ENCODE measurements at regions of chr11 and their contacts with region 1.

Region 1: GRCh38 chr11:108193725-108194124 is 28.7 kb downstream of the NPAT start:
- DNase-seq: no peak
- ATAC-seq: no peak
- H3K4me3 ChIP-seq: no peak overlapping the region
- H3K4me3 Mint-ChIP-seq: no peak overlapping the region
- H3K27ac ChIP-seq: no peak overlapping the region
- H3K27ac Mint-ChIP-seq: peak overlapping the region; percentile 53
- H3K4me1 ChIP-seq: peaks cover 5% of the 10 kb centered on the region
- H3K4me1 Mint-ChIP-seq: peaks cover 41% of the 10 kb centered on the region
- H3K27me3 ChIP-seq: no peaks in the 10 kb centered on the region
- H3K27me3 Mint-ChIP-seq: no peaks in the 10 kb centered on the region
- CTCF ChIP-seq: no peak

Region 2: GRCh38 chr11:108154591-108154990 is 39.1 kb before region 1 on chr11:
- CTCF ChIA-PET with region 1: no interaction called
- POLR2A ChIA-PET with region 1: no interaction called
- intact Hi-C with region 1: loop called in 1 of 2 experiments (anchors 5 kb)
- DNase-seq: no peak
- ATAC-seq: no peak
- H3K4me3 ChIP-seq: no peak overlapping the region
- H3K4me3 Mint-ChIP-seq: no peak overlapping the region
- H3K27ac ChIP-seq: no peak overlapping the region
- H3K27ac Mint-ChIP-seq: peak overlapping the region; percentile 55
- H3K4me1 ChIP-seq: no peaks in the 10 kb centered on the region
- H3K4me1 Mint-ChIP-seq: peaks cover 5% of the 10 kb centered on the region
- H3K27me3 ChIP-seq: no peaks in the 10 kb centered on the region
- H3K27me3 Mint-ChIP-seq: no peaks in the 10 kb centered on the region
- CTCF ChIP-seq: no peak

Region 3: DNA sequence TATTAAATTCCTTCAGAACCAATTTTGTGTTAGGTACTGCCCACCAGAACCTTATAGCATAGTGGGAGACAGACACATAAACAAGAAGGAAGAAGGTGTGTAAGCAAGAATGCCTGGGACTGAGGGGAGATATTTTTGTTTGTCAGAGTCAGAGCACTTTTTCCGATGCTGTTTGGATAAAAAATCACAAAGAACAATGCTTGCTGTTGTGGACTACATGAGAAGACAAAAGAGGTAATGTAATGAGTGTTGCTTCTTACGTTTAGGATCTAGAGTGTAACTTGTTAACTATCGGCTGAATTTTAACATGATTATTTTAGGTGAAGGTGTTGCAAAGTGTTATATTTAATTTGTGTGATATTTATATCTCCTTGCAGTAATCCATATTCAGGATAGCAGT is 114.0 kb after region 1 on chr11:
- CTCF ChIA-PET with region 1: no interaction called
- POLR2A ChIA-PET with region 1: no interaction called
- intact Hi-C with region 1: loop called in 1 of 2 experiments (anchors 5 kb)
- DNase-seq: no peak
- ATAC-seq: no peak
- H3K4me3 ChIP-seq: no peak overlapping the region
- H3K4me3 Mint-ChIP-seq: no peak overlapping the region
- H3K27ac ChIP-seq: no peak overlapping the region
- H3K27ac Mint-ChIP-seq: peak overlapping the region; percentile 78
- H3K4me1 ChIP-seq: no peaks in the 10 kb centered on the region
- H3K4me1 Mint-ChIP-seq: peaks cover 52% of the 10 kb centered on the region
- H3K27me3 ChIP-seq: no peaks in the 10 kb centered on the region
- H3K27me3 Mint-ChIP-seq: no peaks in the 10 kb centered on the region
- CTCF ChIP-seq: no peak

Region 4: DNA sequence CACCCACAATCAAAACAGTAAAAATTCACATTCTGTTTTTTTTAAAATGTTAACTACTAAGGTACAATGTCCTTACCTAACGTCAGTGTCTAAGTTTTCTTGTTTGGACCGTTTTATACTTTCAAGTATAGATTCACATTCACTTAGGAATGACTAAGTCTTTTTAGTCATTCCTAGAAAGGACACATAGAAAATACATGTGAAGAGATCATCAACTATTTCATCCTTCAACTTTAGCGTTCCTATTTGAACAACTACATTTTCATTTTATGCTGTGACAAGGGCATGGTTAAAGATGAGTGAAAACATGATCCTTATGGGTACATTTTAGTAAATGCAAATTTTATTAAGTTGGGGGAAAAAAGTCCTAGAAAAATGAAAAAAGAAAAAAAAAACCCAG is 533.9 kb after region 1 on chr11:
- CTCF ChIA-PET with region 1: no interaction called
- POLR2A ChIA-PET with region 1: no interaction called
- intact Hi-C with region 1: no loop called
- DNase-seq: no peak
- ATAC-seq: no peak
- H3K4me3 ChIP-seq: no peak overlapping the region
- H3K4me3 Mint-ChIP-seq: no peak overlapping the region
- H3K27ac ChIP-seq: no peak overlapping the region
- H3K27ac Mint-ChIP-seq: no peak overlapping the region
- H3K4me1 ChIP-seq: no peaks in the 10 kb centered on the region
- H3K4me1 Mint-ChIP-seq: peaks cover 22% of the 10 kb centered on the region
- H3K27me3 ChIP-seq: no peaks in the 10 kb centered on the region
- H3K27me3 Mint-ChIP-seq: no peaks in the 10 kb centered on the region
- CTCF ChIP-seq: no peak